HepG2 (cell line): ENCODE measurements at regions of chr3 and their contacts with region 1.

Region 1: GRCh38 chr3:13452490-13453335 is 27.4 kb upstream of the HDAC11 start:
- DNase-seq: peak; percentile 63
- ATAC-seq: peak; percentile 71
- H3K4me3 ChIP-seq: peak overlapping the region; percentile 66 to 72 (median 70)
- H3K27ac ChIP-seq: peak overlapping the region; percentile 62
- H3K4me1 ChIP-seq: peaks cover 57% of the 10 kb centered on the region
- H3K27me3 ChIP-seq: no peaks in the 10 kb centered on the region
- CTCF ChIP-seq: peak; percentile 77
- EP300 ChIP-seq: no peak
- POLR2A ChIP-seq: no peak
- RAD21 ChIP-seq: peak; percentile 51

Region 2: GRCh38 chr3:13301286-13301987 is 151.3 kb before region 1 on chr3:
- CTCF ChIA-PET with region 1: interaction called, 3 read pairs
- POLR2A ChIA-PET with region 1: no interaction called
- in situ Hi-C with region 1: loop called (anchors 5 kb)
- intact Hi-C with region 1: loop called (anchors 10 kb)
- DNase-seq: peak; percentile 65
- ATAC-seq: peak; percentile 6; the same call in 1 of the 3 replicates
- H3K4me3 ChIP-seq: no peak overlapping the region
- H3K27ac ChIP-seq: no peak overlapping the region
- H3K4me1 ChIP-seq: peaks cover 54% of the 10 kb centered on the region
- H3K27me3 ChIP-seq: peaks cover 2 to 23% of the 10 kb centered on the region in 2 experiments; a peak in 4 of 5 replicates
- CTCF ChIP-seq: no peak
- EP300 ChIP-seq: no peak
- POLR2A ChIP-seq: no peak
- RAD21 ChIP-seq: no peak

Region 3: DNA sequence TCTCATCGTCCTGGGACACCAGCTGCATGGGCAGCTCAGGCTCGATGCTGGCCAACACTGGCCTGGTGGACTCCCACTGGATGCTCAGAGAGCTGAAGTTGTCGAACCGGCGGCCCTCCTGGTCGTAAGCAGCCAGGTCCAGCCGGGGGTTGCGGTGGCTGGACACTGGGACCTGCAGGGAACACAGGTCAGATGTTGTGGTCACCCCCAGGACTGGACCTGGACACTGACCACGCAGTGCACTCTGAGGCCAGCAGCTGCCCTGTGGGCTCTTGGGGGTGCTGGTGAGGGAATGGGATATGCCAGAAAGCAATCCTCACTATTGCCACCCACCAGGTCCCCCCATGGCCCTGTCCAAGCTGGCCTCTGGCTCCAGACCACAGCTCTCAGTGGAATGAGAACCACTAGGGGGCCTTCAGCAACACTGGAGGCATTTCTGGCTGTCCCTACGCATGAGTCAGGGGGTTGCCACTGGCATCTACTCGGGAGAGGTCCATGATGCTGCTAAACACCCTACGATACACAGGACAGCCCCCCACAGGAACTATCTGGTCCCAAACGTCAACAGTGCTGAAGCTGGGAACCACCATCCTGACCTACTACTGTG is 98.7 kb before region 1 on chr3:
- CTCF ChIA-PET with region 1: no interaction called
- POLR2A ChIA-PET with region 1: no interaction called
- in situ Hi-C with region 1: no loop called
- intact Hi-C with region 1: loop called (anchors 1 kb)
- DNase-seq: no peak
- ATAC-seq: peak; percentile 73
- H3K4me3 ChIP-seq: no peak overlapping the region
- H3K27ac ChIP-seq: no peak overlapping the region
- H3K4me1 ChIP-seq: no peaks in the 10 kb centered on the region
- H3K27me3 ChIP-seq: no peaks in the 10 kb centered on the region
- CTCF ChIP-seq: peak; percentile 49
- EP300 ChIP-seq: no peak
- POLR2A ChIP-seq: no peak
- RAD21 ChIP-seq: peak; percentile 37; the same call in 1 of the 2 replicates

Region 4: GRCh38 chr3:13391308-13391707 is 61.4 kb before region 1 on chr3:
- CTCF ChIA-PET with region 1: no interaction called
- POLR2A ChIA-PET with region 1: interaction called, 7 read pairs
- in situ Hi-C with region 1: no loop called
- intact Hi-C with region 1: loop called (anchors 5 kb)
- DNase-seq: no peak
- ATAC-seq: no peak
- H3K4me3 ChIP-seq: no peak overlapping the region
- H3K27ac ChIP-seq: no peak overlapping the region
- H3K4me1 ChIP-seq: peaks cover 46% of the 10 kb centered on the region
- H3K27me3 ChIP-seq: no peaks in the 10 kb centered on the region
- CTCF ChIP-seq: peak; percentile 30
- EP300 ChIP-seq: no peak
- POLR2A ChIP-seq: no peak
- RAD21 ChIP-seq: no peak

Region 5: GRCh38 chr3:13479581-13480339 is 27.0 kb after region 1 on chr3 and contains the start of gene HDAC11:
- CTCF ChIA-PET with region 1: no interaction called
- POLR2A ChIA-PET with region 1: interaction called, 18 read pairs
- in situ Hi-C with region 1: no loop called
- intact Hi-C with region 1: no loop called
- DNase-seq: peak; percentile 94
- ATAC-seq: peak; percentile 78
- H3K4me3 ChIP-seq: peak within 1 kb of the TSS; percentile 75 to 86 (median 81)
- H3K27ac ChIP-seq: peak within 1 kb of the TSS; percentile 95
- H3K4me1 ChIP-seq: peaks cover 86% of the 10 kb centered on the region
- H3K27me3 ChIP-seq: no peaks in the 10 kb centered on the region; a peak in 1 of 5 replicates
- CTCF ChIP-seq: peak; percentile 39
- EP300 ChIP-seq: no peak
- POLR2A ChIP-seq: peak in 1 of 2 experiments; percentile 61; a peak in 2 of 4 replicates
- RAD21 ChIP-seq: no peak; the same call in 1 of the 2 replicates
- total RNA-seq, gene HDAC11: 10.5 and 13.7 TPM in 2 replicates